Calu3 (cell line): ENCODE measurements at regions of chr17 and their contacts with region 1.

Region 1: GRCh38 chr17:50783193-50783660 is 15.9 kb upstream of the ANKRD40CL start:
- DNase-seq: peak; percentile 98
- H3K4me3 Mint-ChIP-seq: no peak overlapping the region
- H3K27ac Mint-ChIP-seq: no peak overlapping the region
- H3K4me1 Mint-ChIP-seq: no peaks in the 10 kb centered on the region
- H3K27me3 Mint-ChIP-seq: peaks cover 8% of the 10 kb centered on the region
- CTCF ChIP-seq: peak; percentile 100

Region 2: DNA sequence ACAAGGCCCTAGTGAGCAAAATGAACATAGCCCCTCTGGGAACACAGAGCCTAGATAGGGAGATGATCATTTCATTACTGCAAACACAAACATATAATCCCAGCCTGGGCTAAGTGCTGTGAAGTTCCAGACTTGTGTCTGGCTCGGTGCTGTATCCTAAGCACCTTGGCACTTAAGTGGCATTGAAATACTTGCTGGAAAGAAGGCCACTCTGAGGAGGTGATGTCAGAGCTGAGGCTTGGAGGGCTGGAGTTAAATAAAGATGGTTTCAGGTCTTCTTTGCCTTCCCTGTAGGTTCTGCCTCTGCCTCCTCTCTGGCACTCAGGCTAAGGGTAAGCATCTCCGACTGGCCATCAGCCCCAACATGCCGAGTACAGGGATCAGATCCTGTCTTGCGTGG is 225.1 kb before region 1 on chr17:
- CTCF ChIA-PET with region 1: no interaction called
- intact Hi-C with region 1: no loop called
- DNase-seq: no peak
- H3K4me3 Mint-ChIP-seq: no peak overlapping the region
- H3K27ac Mint-ChIP-seq: no peak overlapping the region
- H3K4me1 Mint-ChIP-seq: peaks cover 5% of the 10 kb centered on the region
- H3K27me3 Mint-ChIP-seq: peaks cover 57% of the 10 kb centered on the region
- CTCF ChIP-seq: no peak

Region 3: GRCh38 chr17:50841949-50842354 is 58.7 kb after region 1 on chr17:
- CTCF ChIA-PET with region 1: interaction called, 29 read pairs
- intact Hi-C with region 1: loop called (anchors 1 kb)
- DNase-seq: peak; percentile 91
- H3K4me3 Mint-ChIP-seq: no peak overlapping the region
- H3K27ac Mint-ChIP-seq: no peak overlapping the region
- H3K4me1 Mint-ChIP-seq: peaks cover 8% of the 10 kb centered on the region
- H3K27me3 Mint-ChIP-seq: peaks cover 6% of the 10 kb centered on the region
- CTCF ChIP-seq: peak; percentile 83

Region 4: DNA sequence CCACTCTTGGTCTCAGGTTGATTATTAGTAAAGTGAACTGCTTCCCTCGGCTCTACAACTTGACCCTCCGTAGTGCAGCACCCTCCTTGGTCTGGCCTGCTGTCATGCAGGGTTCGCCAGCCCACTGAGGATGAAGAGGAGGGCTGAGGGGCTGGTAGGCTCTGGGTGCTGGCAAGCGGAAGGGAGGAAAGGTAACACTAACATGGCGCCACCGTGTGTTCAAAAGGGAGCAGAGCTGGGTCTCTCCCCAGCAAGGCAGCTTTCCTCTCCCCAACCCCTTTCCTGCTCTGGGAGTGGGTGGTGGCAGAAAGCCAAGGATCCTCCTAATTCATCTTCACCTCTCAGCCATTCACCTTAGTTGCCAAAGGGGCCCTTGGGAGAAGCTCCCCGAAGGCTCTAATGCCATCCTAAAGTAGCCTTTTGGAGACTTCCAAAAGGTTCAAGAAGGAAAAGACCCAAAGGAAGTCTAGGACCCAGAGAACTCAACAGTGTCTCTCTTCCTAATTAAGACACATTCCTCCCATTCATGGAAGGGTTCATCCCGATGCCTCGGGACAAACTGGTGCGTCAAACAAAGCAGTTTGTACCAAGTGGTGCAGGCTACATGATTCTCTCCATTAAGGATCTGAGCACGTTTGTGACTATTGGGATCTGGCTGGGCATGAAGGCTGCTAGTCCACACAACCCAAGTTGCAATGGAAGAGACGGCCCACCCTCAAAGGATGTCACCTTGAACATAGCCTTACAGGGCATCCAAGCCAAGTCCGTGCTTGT is 173.7 kb after region 1 on chr17:
- CTCF ChIA-PET with region 1: interaction called, 15 read pairs
- intact Hi-C with region 1: loop called (anchors 2 kb)
- DNase-seq: peak; percentile 80
- H3K4me3 Mint-ChIP-seq: no peak overlapping the region
- H3K27ac Mint-ChIP-seq: no peak overlapping the region
- H3K4me1 Mint-ChIP-seq: peaks cover 4% of the 10 kb centered on the region
- H3K27me3 Mint-ChIP-seq: no peaks in the 10 kb centered on the region
- CTCF ChIP-seq: peak; percentile 94

Region 5: GRCh38 chr17:51540151-51540550 is 756.9 kb after region 1 on chr17:
- CTCF ChIA-PET with region 1: no interaction called
- intact Hi-C with region 1: no loop called
- DNase-seq: no peak
- H3K4me3 Mint-ChIP-seq: no peak overlapping the region
- H3K27ac Mint-ChIP-seq: no peak overlapping the region
- H3K4me1 Mint-ChIP-seq: no peaks in the 10 kb centered on the region
- H3K27me3 Mint-ChIP-seq: peaks cover 78% of the 10 kb centered on the region
- CTCF ChIP-seq: no peak